ENCODE measurements at regions of chr17 and their contacts with region 1.

Region 1: DNA sequence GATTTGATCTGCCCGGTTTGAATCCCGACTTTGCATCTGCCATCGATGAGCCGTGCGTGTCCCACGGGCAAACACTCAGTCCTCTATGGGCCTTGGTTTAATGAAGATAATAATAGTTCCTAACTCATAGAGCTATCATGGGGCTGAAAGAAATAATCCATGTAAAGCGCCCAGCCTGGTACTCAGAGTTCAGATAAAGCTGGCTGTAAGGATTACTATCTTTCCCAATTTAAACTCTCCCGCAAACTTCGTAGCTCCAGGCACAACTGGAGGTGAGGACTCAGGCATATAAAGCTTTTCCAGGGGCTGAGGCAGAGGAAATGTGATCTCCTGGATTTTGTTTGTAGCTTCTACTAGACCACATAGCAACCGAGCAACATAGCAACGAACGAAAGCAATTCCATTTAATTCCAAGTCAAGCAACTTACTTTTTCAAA is 16.3 kb downstream of the ALOX15 start:
- DNase-seq: no peak
- H3K4me3 ChIP-seq: no peak overlapping the region
- H3K4me3 Mint-ChIP-seq: no peak overlapping the region
- H3K27ac ChIP-seq: no peak overlapping the region
- H3K27ac Mint-ChIP-seq: no peak overlapping the region
- H3K4me1 ChIP-seq: no peaks in the 10 kb centered on the region
- H3K4me1 Mint-ChIP-seq: no peaks in the 10 kb centered on the region
- H3K27me3 ChIP-seq: no peaks in the 10 kb centered on the region
- H3K27me3 Mint-ChIP-seq: peaks cover 3 to 8% of the 10 kb centered on the region in 2 donors

Region 2: DNA sequence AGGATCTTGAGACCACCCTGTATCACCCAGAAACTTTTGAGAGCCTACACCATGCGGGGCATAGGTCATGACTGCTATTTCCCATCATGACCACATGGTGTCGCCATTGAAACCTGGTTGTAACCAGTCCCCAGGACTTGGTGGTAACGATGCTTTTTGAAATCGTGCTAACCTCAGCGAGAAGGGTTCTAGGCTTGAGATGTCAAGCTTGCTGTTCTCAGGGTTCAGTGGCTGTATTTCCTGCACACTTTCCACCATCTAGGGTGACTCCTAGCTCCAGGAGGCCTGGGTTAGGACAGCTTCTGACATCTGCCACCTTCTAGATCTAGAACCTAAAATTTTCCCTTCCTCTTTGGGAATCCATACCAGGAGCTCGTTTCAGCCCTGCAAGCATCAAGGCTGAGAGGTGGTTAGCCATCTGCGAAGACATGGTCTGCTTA is 204.5 kb before region 1 on chr17:
- CTCF ChIA-PET with region 1: interaction called, 58 read pairs
- POLR2A ChIA-PET with region 1: no interaction called
- intact Hi-C with region 1: no loop called
- DNase-seq: peak; percentile 51 to 67 (median 64)
- H3K4me3 ChIP-seq: no peak overlapping the region
- H3K4me3 Mint-ChIP-seq: no peak overlapping the region
- H3K27ac ChIP-seq: no peak overlapping the region
- H3K27ac Mint-ChIP-seq: peak overlapping the region in 1 of 7 donors; percentile 15
- H3K4me1 ChIP-seq: no peaks in the 10 kb centered on the region
- H3K4me1 Mint-ChIP-seq: peaks cover 0 to 4% (median 2%) of the 10 kb centered on the region in 4 donors
- H3K27me3 ChIP-seq: no peaks in the 10 kb centered on the region
- H3K27me3 Mint-ChIP-seq: no peaks in the 10 kb centered on the region

Region 3: DNA sequence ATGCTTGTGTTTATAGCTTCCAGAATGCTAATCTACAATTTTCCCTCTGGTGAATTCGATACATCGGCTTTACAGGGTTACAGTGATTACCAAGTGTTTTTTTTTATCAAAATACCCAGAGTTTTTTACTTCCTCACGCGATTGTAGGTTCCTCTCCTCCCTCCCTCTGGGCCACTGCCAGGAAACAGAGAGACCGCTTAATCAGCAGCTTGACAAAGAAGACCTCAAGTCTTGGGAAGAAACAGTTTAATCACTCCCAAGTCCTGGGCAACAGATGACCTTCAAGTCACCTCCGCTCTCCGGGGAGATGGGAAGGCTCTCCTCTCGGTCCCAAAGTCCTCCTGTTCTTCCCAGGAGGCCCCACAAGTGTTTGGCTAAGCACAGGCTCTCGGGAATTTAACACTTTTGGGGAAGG is 17.4 kb before region 1 on chr17:
- CTCF ChIA-PET with region 1: no interaction called
- POLR2A ChIA-PET with region 1: no interaction called
- intact Hi-C with region 1: no loop called
- DNase-seq: no peak
- H3K4me3 ChIP-seq: no peak overlapping the region
- H3K4me3 Mint-ChIP-seq: no peak overlapping the region
- H3K27ac ChIP-seq: no peak overlapping the region
- H3K27ac Mint-ChIP-seq: no peak overlapping the region
- H3K4me1 ChIP-seq: no peaks in the 10 kb centered on the region
- H3K4me1 Mint-ChIP-seq: no peaks in the 10 kb centered on the region
- H3K27me3 ChIP-seq: no peaks in the 10 kb centered on the region
- H3K27me3 Mint-ChIP-seq: peaks cover 15 to 27% of the 10 kb centered on the region in 2 donors

Region 4: GRCh38 chr17:4678427-4679026 is 53.3 kb after region 1 on chr17:
- CTCF ChIA-PET with region 1: no interaction called
- POLR2A ChIA-PET with region 1: no interaction called
- intact Hi-C with region 1: no loop called
- DNase-seq: no peak
- H3K4me3 ChIP-seq: no peak overlapping the region
- H3K4me3 Mint-ChIP-seq: no peak overlapping the region
- H3K27ac ChIP-seq: no peak overlapping the region
- H3K27ac Mint-ChIP-seq: peak overlapping the region in 1 of 7 donors; percentile 42
- H3K4me1 ChIP-seq: no peaks in the 10 kb centered on the region
- H3K4me1 Mint-ChIP-seq: peaks cover 0 to 2% (median under 1%) of the 10 kb centered on the region in 4 donors
- H3K27me3 ChIP-seq: no peaks in the 10 kb centered on the region
- H3K27me3 Mint-ChIP-seq: no peaks in the 10 kb centered on the region

Region 5: DNA sequence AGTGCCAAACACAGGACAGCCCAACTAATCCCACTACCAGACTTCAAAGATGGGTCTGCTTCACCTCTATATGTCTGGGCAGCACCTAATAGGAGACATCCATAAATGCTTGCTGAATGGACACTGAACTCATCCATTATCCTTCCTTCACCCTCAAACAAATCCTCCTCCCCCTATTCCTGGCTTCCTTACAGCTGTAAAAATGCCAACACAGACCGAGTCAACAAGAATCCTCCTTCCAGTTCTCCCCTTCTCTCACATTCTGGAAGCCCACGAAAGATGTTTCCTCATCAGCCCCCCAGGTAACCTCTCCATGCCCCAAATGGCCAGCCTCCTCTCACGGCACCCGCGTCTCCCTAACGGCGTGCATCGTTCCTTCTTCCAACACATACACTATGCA is 66.5 kb after region 1 on chr17:
- CTCF ChIA-PET with region 1: no interaction called
- POLR2A ChIA-PET with region 1: no interaction called
- intact Hi-C with region 1: no loop called
- DNase-seq: no peak
- H3K4me3 ChIP-seq: no peak overlapping the region
- H3K4me3 Mint-ChIP-seq: no peak overlapping the region
- H3K27ac ChIP-seq: no peak overlapping the region
- H3K27ac Mint-ChIP-seq: peak overlapping the region in 5 of 7 donors; percentile 10 to 85 (median 64)
- H3K4me1 ChIP-seq: peaks cover 14% of the 10 kb centered on the region
- H3K4me1 Mint-ChIP-seq: peaks cover 17 to 56% (median 39%) of the 10 kb centered on the region in 4 donors
- H3K27me3 ChIP-seq: no peaks in the 10 kb centered on the region
- H3K27me3 Mint-ChIP-seq: no peaks in the 10 kb centered on the region

Region 6: GRCh38 chr17:4877089-4877488 is 251.9 kb after region 1 on chr17:
- CTCF ChIA-PET with region 1: no interaction called
- POLR2A ChIA-PET with region 1: no interaction called
- intact Hi-C with region 1: no loop called
- DNase-seq: no peak
- H3K4me3 ChIP-seq: no peak overlapping the region
- H3K4me3 Mint-ChIP-seq: no peak overlapping the region
- H3K27ac ChIP-seq: no peak overlapping the region
- H3K27ac Mint-ChIP-seq: peak overlapping the region in 1 of 7 donors; percentile 60
- H3K4me1 ChIP-seq: no peaks in the 10 kb centered on the region
- H3K4me1 Mint-ChIP-seq: peaks cover 4 to 14% (median 11%) of the 10 kb centered on the region in 4 donors
- H3K27me3 ChIP-seq: no peaks in the 10 kb centered on the region
- H3K27me3 Mint-ChIP-seq: no peaks in the 10 kb centered on the region

Region 7: DNA sequence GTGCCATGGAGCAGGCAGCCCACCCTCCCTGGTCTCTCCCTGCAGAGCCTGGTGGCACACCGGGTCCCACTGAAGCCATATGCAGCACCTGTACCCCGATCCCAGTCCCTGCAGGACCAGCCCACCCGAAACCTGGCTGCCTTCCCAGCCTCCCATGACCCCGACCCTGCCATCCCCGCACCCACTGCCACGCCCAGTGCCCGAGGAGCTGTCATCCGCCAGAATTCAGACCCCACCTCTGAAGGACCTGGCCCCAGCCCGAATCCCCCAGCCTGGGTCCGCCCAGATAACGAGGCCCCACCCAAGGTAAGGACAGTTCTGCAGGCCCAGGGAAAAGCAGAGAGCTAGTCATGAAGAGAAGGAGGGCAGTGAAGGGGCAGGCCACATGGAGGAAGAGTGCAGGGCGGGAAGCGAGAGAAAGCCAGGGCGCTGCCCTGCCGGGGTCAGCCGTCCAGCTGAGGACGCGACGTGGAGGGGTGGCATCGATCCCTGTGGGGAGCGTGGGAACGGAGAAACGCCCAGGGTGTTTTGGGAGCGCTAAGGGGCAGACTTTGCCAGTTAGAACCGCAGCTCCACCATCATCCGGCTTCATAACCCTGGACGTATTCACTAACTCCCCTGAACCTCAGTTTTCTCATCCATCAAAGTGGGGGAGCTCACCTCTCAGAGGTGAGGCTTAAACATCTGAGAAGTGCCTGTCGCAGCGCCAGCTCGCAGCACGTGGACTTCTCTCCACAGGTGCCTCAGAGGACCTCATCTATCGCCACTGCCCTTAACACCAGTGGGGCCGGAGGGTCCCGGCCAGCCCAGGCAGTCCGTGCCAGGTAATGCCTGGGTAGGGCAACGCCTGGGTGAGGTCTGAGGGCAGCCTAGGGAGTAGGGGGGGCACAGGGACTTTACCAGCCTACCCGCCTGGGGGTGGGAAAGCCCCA is 266.5 kb after region 1 on chr17:
- CTCF ChIA-PET with region 1: no interaction called
- POLR2A ChIA-PET with region 1: no interaction called
- intact Hi-C with region 1: loop called (anchors 1 kb)
- DNase-seq: no peak
- H3K4me3 ChIP-seq: no peak overlapping the region
- H3K4me3 Mint-ChIP-seq: no peak overlapping the region
- H3K27ac ChIP-seq: no peak overlapping the region
- H3K27ac Mint-ChIP-seq: no peak overlapping the region
- H3K4me1 ChIP-seq: no peaks in the 10 kb centered on the region
- H3K4me1 Mint-ChIP-seq: peaks cover 0 to 6% (median 2%) of the 10 kb centered on the region in 4 donors
- H3K27me3 ChIP-seq: no peaks in the 10 kb centered on the region
- H3K27me3 Mint-ChIP-seq: no peaks in the 10 kb centered on the region